ENCODE measurements at regions of chr6 and their contacts with region 1.

Region 1: DNA sequence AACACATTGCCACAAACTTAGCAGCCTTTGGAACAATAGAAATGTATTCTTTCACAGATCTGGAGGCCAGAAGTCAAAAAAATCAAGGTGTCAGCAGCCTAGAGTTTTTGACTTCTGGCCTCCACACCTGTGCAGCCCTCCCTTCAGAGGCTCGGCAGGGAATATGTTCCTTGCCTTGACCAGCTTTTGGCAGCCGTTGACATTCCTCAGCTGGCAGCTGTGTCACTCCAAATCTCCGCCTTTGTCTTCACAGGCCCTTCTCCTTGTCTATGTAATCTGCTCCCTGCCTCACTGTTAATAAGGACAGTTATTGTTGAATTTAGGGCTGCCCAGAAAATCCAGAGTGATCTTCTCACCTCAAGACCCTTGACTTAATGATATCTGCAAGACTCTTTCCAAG is 17.2 kb upstream of the AHI1 start:
- DNase-seq: no peak
- ATAC-seq: no peak
- H3K4me3 ChIP-seq: no peak overlapping the region
- H3K27ac ChIP-seq: no peak overlapping the region
- H3K4me1 ChIP-seq: no peaks in the 10 kb centered on the region
- H3K27me3 ChIP-seq: no peaks in the 10 kb centered on the region

Region 2: GRCh38 chr6:135555550-135555949 is 40.8 kb after region 1 on chr6:
- intact Hi-C with region 1: no loop called
- DNase-seq: no peak
- ATAC-seq: no peak
- H3K4me3 ChIP-seq: no peak overlapping the region
- H3K27ac ChIP-seq: no peak overlapping the region
- H3K4me1 ChIP-seq: no peaks in the 10 kb centered on the region
- H3K27me3 ChIP-seq: no peaks in the 10 kb centered on the region

Region 3: GRCh38 chr6:136216503-136217401 is 702.0 kb after region 1 on chr6:
- intact Hi-C with region 1: loop called (anchors 5 to 10 kb)
- DNase-seq: no peak
- ATAC-seq: no peak
- H3K4me3 ChIP-seq: no peak overlapping the region
- H3K27ac ChIP-seq: no peak overlapping the region
- H3K4me1 ChIP-seq: no peaks in the 10 kb centered on the region
- H3K27me3 ChIP-seq: no peaks in the 10 kb centered on the region

Measured in aorta (tissue), 5 donors.